ENCODE measurements at regions of chr2 and their contacts with region 1.

Region 1: GRCh38 chr2:55431982-55432627 is 12.4 kb upstream of the CCDC88A start:
- DNase-seq: peak in 6 of 9 donors; percentile 6 to 54 (median 32)
- ATAC-seq: peak; percentile 66
- H3K4me3 ChIP-seq: no peak overlapping the region
- H3K4me3 Mint-ChIP-seq: no peak overlapping the region
- H3K27ac ChIP-seq: no peak overlapping the region
- H3K27ac Mint-ChIP-seq: peak overlapping the region in 1 of 9 donors; percentile 39
- H3K4me1 ChIP-seq: no peaks in the 10 kb centered on the region
- H3K4me1 Mint-ChIP-seq: peaks cover 0 to 7% (median 2%) of the 10 kb centered on the region in 7 donors
- H3K27me3 ChIP-seq: no peaks in the 10 kb centered on the region
- H3K27me3 Mint-ChIP-seq: peaks cover 0 to 15% (median 0%) of the 10 kb centered on the region in 5 donors

Region 2: DNA sequence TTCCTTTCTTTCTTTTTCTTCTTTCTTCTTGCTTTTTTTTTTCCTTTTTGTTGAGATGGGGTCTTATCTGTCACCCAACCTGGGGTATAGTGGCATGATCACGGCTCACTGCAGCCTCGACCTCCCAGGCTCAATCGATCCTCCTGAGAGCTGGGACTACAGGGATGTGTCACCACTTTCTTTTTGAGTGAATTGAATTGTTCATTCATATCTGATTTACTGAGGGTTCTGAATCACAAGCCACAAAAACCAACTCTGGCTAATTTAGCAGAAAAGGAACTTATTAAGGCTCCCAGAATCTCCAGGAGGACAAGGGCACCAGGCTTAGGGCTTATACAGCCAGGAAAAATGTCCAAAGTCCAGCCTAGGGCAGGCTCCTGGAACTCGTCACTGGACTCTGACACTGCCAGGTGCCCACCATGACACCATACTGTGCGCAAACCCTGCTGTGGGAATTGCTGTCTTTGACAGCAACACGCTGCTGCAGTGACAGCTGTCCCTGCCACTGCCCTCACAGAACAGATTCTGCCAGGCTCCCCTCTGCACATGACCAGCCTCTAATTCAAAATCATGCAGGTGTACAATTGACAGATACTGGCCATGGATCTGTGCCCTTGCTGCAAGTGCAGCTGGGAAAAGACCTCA is 751.6 kb before region 1 on chr2:
- CTCF ChIA-PET with region 1: no interaction called
- POLR2A ChIA-PET with region 1: no interaction called
- intact Hi-C with region 1: no loop called
- DNase-seq: peak in 1 of 9 donors; percentile 53
- ATAC-seq: peak; percentile 24
- H3K4me3 ChIP-seq: no peak overlapping the region
- H3K4me3 Mint-ChIP-seq: peak overlapping the region in 1 of 10 donors; percentile 91
- H3K27ac ChIP-seq: no peak overlapping the region
- H3K27ac Mint-ChIP-seq: peak overlapping the region in 1 of 9 donors; percentile 82
- H3K4me1 ChIP-seq: no peaks in the 10 kb centered on the region
- H3K4me1 Mint-ChIP-seq: peaks cover 4 to 58% (median 7%) of the 10 kb centered on the region in 7 donors
- H3K27me3 ChIP-seq: no peaks in the 10 kb centered on the region
- H3K27me3 Mint-ChIP-seq: peaks cover 0 to 51% (median 4%) of the 10 kb centered on the region in 5 donors

Region 3: DNA sequence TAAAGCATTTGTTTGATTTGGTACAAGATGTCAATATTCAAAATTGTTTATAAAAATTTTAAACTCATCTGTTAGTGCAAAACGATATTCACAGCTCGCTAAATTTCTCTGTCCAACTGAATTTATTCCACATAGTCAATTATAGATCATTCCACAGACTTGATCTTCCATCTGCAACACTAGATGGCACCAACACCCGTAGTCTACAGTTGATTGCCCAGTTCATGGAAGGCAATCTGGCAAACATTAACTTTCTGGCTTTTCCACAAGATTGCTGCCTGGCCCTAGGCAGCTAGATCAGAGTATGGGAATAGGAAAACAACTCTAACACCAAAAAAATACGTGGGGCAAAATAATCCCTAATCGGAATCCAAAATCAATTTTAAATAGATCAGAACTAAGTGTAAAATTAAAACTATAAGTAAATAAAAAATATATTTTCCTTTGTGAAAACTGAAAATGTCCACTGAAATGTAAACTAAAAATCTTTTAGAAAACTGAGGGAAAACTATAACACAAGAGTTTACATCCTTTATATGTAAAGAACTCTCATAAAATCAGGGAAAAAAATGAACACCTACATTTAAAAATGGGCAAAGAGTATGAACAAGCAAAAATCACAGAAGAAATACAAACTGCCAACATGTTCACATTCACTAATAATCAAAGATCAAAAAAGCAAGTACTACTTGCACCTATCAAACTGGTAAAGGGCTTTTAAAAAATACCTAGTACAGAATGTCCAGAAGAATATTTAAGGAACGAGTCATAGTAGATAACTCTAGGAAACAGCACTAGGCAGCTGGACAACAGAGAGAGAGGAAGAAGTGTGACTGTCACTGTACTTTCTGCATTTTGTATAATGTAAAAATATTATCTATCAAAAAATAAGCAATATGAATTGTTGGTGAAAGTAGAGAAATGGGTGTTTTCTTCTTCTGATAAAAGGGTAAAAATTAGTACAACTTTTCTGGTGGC is 416.9 kb before region 1 on chr2:
- CTCF ChIA-PET with region 1: no interaction called
- POLR2A ChIA-PET with region 1: no interaction called
- intact Hi-C with region 1: loop called (anchors 1 to 2 kb)
- DNase-seq: peak in 7 of 9 donors; percentile 13 to 56 (median 41)
- ATAC-seq: peak; percentile 60
- H3K4me3 ChIP-seq: no peak overlapping the region
- H3K4me3 Mint-ChIP-seq: no peak overlapping the region
- H3K27ac ChIP-seq: no peak overlapping the region
- H3K27ac Mint-ChIP-seq: peak overlapping the region in 3 of 9 donors; percentile 0 to 47 (median 14)
- H3K4me1 ChIP-seq: peaks cover 9 to 10% of the 10 kb centered on the region in 2 donors
- H3K4me1 Mint-ChIP-seq: peaks cover 19 to 66% (median 41%) of the 10 kb centered on the region in 7 donors
- H3K27me3 ChIP-seq: no peaks in the 10 kb centered on the region
- H3K27me3 Mint-ChIP-seq: no peaks in the 10 kb centered on the region

Region 4: GRCh38 chr2:55268907-55269644 is 163.0 kb before region 1 on chr2 and contains the start of gene MTIF2:
- CTCF ChIA-PET with region 1: no interaction called
- POLR2A ChIA-PET with region 1: no interaction called
- intact Hi-C with region 1: loop called (anchors 1 to 2 kb)
- DNase-seq: peak; percentile 64 to 90 (median 75)
- ATAC-seq: peak; percentile 97
- H3K4me3 ChIP-seq: peak within 1 kb of the TSS; percentile 84
- H3K4me3 Mint-ChIP-seq: peak within 1 kb of the TSS; percentile 78 to 97 (median 94)
- H3K27ac ChIP-seq: peak within 1 kb of the TSS; percentile 79
- H3K27ac Mint-ChIP-seq: peak within 1 kb of the TSS; percentile 94 to 97 (median 96)
- H3K4me1 ChIP-seq: peaks cover 13 to 16% of the 10 kb centered on the region in 2 donors
- H3K4me1 Mint-ChIP-seq: peaks cover 15 to 35% (median 27%) of the 10 kb centered on the region in 7 donors
- H3K27me3 ChIP-seq: no peaks in the 10 kb centered on the region
- H3K27me3 Mint-ChIP-seq: peaks cover 0 to 5% (median 0%) of the 10 kb centered on the region in 5 donors
- total RNA-seq, gene MTIF2: 23.0 to 35.5 (median 28.0) TPM

Region 5: DNA sequence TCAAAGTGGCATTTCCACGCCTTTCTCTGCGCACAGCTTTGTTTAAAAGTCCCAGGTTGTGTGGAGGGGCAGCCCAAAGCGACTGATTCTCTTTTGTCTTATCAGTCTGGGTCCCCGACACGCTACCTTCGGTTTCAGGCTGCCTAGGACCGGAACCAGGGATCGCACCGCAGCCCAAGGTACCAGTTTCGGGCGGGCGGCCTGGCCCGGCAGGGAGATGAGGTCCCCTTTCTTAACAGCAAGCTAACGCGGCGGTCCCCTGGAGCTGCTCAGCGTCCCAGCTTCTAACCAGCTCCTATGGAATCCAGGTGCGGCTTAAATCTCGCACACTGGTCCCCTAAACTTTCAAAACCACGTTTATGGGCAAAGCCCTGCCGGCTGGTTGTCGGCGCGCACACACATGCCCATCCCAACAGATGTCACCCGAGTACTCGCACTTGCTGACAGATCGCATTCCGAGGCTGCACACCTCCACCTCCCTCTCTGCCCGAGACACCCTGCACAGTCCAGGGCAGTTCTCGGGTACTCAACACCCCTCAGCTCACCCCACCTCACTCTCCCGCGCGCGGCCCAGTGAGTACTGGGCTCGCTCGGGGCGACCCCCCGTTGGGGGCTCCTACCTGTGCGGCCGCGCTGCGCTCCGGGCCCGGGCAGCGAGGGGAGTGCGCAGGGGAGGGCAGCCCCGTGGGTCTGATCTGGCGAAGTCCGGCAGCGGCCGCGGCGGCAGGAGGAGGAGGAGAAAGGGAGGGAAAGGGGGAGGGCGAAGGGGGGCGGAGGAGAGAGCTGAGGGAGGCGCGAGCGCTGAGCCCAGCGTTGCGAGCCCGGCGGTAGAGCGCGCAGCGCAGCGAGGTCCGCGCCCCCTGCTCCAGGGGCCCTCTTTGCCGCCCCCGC is 491.2 kb after region 1 on chr2 and contains the start of gene EFEMP1:
- CTCF ChIA-PET with region 1: no interaction called
- POLR2A ChIA-PET with region 1: no interaction called
- intact Hi-C with region 1: no loop called
- DNase-seq: no peak
- ATAC-seq: no peak
- H3K4me3 ChIP-seq: no peak within 1 kb of the TSS
- H3K4me3 Mint-ChIP-seq: peak within 1 kb of the TSS in 5 of 10 donors; percentile 8 to 47 (median 23)
- H3K27ac ChIP-seq: no peak within 1 kb of the TSS
- H3K27ac Mint-ChIP-seq: no peak within 1 kb of the TSS
- H3K4me1 ChIP-seq: no peaks in the 10 kb centered on the region
- H3K4me1 Mint-ChIP-seq: peaks cover 0 to 9% (median 0%) of the 10 kb centered on the region in 7 donors
- H3K27me3 ChIP-seq: peaks cover 0 to 8% of the 10 kb centered on the region in 2 donors
- H3K27me3 Mint-ChIP-seq: peaks cover 41 to 52% (median 46%) of the 10 kb centered on the region in 5 donors
- total RNA-seq, gene EFEMP1: not detected

Measured in naive thymus-derived CD4-positive, alpha-beta T cell (primary cell).